ENCODE measurements at regions of chrX and their contacts with region 1.

Region 1: DNA sequence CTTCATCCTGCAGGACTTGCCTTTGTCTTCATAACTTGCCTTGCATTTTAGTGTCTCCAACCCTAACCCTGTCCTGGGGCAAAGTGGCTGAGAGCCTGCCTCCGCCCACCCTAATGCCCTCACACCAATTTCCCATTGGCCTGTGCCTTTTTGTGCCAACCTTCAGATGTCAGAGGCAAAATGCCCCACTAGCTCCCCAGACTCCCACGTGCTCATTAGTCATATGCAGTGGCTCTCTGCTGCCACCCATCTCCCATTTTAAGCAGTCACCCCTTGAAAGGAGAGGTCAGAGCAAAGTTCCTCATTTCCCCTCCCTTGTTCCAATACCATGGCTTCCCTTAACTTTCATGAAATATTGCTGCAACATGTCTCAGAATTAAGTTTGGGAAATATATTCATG is 74.8 kb upstream of the PASD1 start:
- DNase-seq: no peak
- ATAC-seq: no peak
- H3K4me3 ChIP-seq: no peak overlapping the region
- H3K27ac ChIP-seq: no peak overlapping the region
- H3K4me1 ChIP-seq: no peaks in the 10 kb centered on the region
- H3K27me3 ChIP-seq: no peaks in the 10 kb centered on the region
- CTCF ChIP-seq: no peak
- POLR2A ChIP-seq: no peak

Region 2: GRCh38 chrX:151419782-151420181 is 68.9 kb before region 1 on chrX:
- in situ Hi-C with region 1: loop called in 1 of 4 experiments (anchors 10 kb)
- intact Hi-C with region 1: no loop called
- DNase-seq: no peak
- ATAC-seq: no peak
- H3K4me3 ChIP-seq: no peak overlapping the region
- H3K27ac ChIP-seq: no peak overlapping the region
- H3K4me1 ChIP-seq: no peaks in the 10 kb centered on the region
- H3K27me3 ChIP-seq: no peaks in the 10 kb centered on the region
- CTCF ChIP-seq: no peak
- POLR2A ChIP-seq: no peak

Region 3: GRCh38 chrX:151825927-151826481 is 337.3 kb after region 1 on chrX:
- in situ Hi-C with region 1: no loop called
- intact Hi-C with region 1: loop called (anchors 10 kb)
- DNase-seq: peak in 1 of 2 donors; percentile 18
- ATAC-seq: peak; percentile 56 to 63
- H3K4me3 ChIP-seq: no peak overlapping the region
- H3K27ac ChIP-seq: no peak overlapping the region
- H3K4me1 ChIP-seq: no peaks in the 10 kb centered on the region
- H3K27me3 ChIP-seq: no peaks in the 10 kb centered on the region
- CTCF ChIP-seq: no peak
- POLR2A ChIP-seq: no peak

Measured in gastrocnemius medialis (tissue), 4 donors.